GM13976 (cell line): ENCODE measurements at regions of chr20 and their contacts with region 1.

Region 1: GRCh38 chr20:44747166-44748004 is 1.7 kb downstream of the KCNK15 start:
- DNase-seq: peak; percentile 80
- CTCF ChIP-seq: peak; percentile 44

Region 2: GRCh38 chr20:44861531-44862006 is 114.2 kb after region 1 on chr20:
- in situ Hi-C with region 1: loop called (anchors 10 kb)
- DNase-seq: no peak
- CTCF ChIP-seq: no peak